Gastrocnemius medialis (tissue), 4 donors: ENCODE measurements at regions of chr12 and their contacts with region 1.

Region 1: DNA sequence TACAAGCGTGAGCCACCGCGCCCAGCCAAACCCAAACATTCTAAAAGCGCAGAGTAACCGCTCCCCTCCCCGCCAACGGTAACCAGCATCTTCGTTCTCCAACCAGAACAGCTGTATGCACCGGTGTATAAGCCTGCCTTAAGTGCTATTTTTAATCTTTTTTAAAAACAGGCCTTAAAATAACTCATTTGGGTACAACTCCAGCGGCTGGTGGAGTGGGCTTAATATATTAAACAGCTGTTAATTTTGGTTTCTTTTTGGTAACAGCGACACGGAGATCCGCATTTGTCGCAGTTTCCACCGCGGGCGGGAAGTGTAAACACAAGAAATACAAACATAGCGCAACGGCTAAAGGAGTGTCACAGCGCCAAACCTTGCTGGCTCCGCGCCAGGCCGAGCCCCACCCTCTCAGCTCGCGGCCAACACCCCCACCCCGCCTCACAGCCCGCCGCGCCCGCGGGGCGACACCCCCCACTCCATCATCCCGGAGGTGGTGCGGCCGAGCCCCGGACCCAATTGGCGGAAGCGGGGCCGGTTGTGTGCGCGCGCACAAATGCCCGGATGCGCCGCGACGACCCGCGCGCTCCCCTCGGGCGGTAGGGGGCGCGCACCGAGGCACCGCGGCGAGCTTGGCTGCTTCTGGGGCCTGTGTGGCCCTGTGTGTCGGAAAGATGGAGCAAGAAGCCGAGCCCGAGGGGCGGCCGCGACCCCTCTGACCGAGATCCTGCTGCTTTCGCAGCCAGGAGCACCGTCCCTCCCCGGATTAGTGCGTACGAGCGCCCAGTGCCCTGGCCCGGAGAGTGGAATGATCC is at the start of gene MDM2:
- DNase-seq: peak; percentile 87 to 93
- ATAC-seq: peak; percentile 85 to 91
- H3K4me3 ChIP-seq: peak within 1 kb of the TSS; percentile 88 to 98 (median 96)
- H3K27ac ChIP-seq: peak within 1 kb of the TSS; percentile 97 to 99 (median 98)
- H3K4me1 ChIP-seq: peaks cover 0 to 13% of the 10 kb centered on the region in 2 donors
- H3K27me3 ChIP-seq: no peaks in the 10 kb centered on the region
- CTCF ChIP-seq: peak; percentile 81 to 91 (median 86)
- POLR2A ChIP-seq: peak; percentile 84 to 90
- total RNA-seq, gene MDM2: 61.6 to 92.2 (median 70.0) TPM

Region 2: DNA sequence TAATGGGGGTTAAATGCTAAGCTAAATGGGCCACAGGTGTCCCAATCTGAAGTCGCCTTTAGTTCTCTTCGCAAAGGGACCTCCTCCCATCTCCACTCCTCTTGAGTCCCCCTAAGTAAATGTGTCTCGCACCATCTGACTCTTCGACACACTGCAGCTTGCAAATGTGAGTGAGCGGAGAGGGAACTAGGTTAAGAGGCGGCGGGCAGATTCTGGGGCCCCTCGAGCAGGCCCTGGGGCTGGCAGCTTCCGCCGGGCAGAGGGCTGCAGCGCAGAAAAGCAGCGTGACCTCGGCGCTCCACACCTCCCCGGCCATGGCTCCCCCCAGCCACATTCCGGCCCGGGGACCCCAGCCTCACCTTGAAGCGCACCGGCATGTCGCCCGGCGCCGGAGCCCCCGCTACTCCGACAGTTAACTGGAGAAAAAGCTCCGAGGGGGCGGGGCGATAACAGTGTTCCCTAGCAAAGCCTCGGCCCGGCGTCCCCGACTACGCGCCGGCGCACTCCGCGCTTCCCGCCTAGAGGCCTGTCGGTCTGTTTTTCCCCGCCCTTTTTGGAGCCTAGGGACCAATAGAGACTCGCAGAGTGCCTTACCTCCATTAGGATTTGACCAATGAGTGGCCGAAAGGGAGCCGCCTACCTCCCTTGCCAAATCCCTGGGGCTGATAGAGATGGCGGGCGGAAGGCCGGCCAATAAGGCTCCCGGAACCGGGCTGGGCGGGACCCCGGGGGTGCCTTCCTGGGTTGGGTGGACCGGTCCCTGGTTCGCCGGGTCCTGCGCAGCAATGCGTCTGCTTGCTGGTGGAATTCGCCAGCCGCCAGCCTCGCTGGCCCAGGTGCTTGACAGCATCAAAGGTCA is 475.7 kb before region 1 on chr12 and contains the start of gene MDM1:
- in situ Hi-C with region 1: no loop called
- intact Hi-C with region 1: loop called (anchors 10 kb)
- DNase-seq: peak; percentile 96 to 97
- ATAC-seq: peak; percentile 100
- H3K4me3 ChIP-seq: peak within 1 kb of the TSS; percentile 71 to 87 (median 84)
- H3K27ac ChIP-seq: peak within 1 kb of the TSS; percentile 41 to 71 (median 69)
- H3K4me1 ChIP-seq: peaks cover 0 to 8% of the 10 kb centered on the region in 2 donors
- H3K27me3 ChIP-seq: no peaks in the 10 kb centered on the region
- CTCF ChIP-seq: peak in 1 of 5 experiments; percentile 6
- POLR2A ChIP-seq: peak in 1 of 2 donors; percentile 33
- total RNA-seq, gene MDM1: 1.6 to 6.8 (median 3.4) TPM

Region 3: DNA sequence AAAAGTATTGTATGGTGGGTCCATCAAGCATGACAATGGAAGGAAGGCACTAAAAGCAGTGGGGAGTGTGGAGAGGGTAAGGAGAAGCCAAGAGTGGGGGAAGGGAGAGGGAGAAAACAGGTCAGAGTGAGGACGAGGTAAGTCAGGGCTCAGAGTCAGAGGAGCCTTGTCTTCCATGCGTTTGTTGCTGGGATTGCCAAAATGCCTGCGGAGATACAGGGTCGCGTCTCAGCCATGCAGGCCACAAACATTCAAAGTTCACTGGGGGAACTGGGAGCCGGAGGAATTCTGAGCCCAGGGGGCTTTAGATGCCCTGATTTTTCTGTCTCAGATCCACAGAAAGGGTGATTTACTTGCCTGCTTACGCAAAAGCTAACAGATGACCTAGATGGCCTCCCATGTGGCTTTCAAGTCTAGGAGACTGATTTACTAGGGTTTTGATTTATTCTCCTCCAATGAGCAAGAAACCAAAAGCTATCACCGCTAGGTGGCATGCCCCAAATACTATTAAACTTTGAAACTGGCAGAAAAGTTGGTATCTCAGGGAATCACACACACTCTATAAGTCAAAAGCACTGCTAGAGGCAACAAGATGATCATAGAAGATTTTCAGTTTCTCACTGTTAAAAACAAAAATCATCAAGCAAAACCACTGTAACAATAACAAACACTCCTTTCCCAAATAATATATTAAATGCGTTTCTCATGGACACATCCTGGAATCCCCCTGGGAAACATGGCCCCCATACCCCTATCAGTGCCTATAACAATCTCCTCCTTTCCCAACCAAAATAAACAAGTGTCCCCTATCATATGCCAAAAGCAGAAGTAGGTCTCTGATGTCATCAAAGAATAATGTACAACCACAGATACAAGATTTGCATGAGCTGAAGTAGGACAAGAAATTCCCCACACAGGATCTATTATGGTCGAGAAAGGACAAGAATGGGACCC is 449.0 kb before region 1 on chr12:
- in situ Hi-C with region 1: loop called in 1 of 4 experiments (anchors 25 kb)
- intact Hi-C with region 1: no loop called
- DNase-seq: peak; percentile 28 to 49
- ATAC-seq: peak; percentile 96
- H3K4me3 ChIP-seq: no peak overlapping the region
- H3K27ac ChIP-seq: peak overlapping the region in 3 of 4 donors; percentile 1 to 36 (median 25)
- H3K4me1 ChIP-seq: peaks cover 10 to 14% of the 10 kb centered on the region in 2 donors
- H3K27me3 ChIP-seq: no peaks in the 10 kb centered on the region
- CTCF ChIP-seq: peak; percentile 46 to 75 (median 69)
- POLR2A ChIP-seq: no peak

Region 4: GRCh38 chr12:68745904-68746571 is 61.7 kb before region 1 on chr12 and contains the start of gene SLC35E3:
- in situ Hi-C with region 1: loop called in 1 of 4 experiments (anchors 5 kb)
- intact Hi-C with region 1: loop called (anchors 1 kb)
- DNase-seq: peak; percentile 85 to 90
- ATAC-seq: peak; percentile 95 to 96
- H3K4me3 ChIP-seq: peak within 1 kb of the TSS; percentile 63 to 92 (median 79)
- H3K27ac ChIP-seq: peak within 1 kb of the TSS; percentile 63 to 84 (median 80)
- H3K4me1 ChIP-seq: peaks cover 21 to 26% of the 10 kb centered on the region in 2 donors
- H3K27me3 ChIP-seq: no peaks in the 10 kb centered on the region
- CTCF ChIP-seq: no peak
- POLR2A ChIP-seq: peak; percentile 54 to 69
- total RNA-seq, gene SLC35E3: 0.92 to 2.7 (median 1.6) TPM

Region 5: GRCh38 chr12:68786929-68787328 is 20.9 kb before region 1 on chr12:
- in situ Hi-C with region 1: no loop called
- intact Hi-C with region 1: no loop called
- DNase-seq: no peak
- ATAC-seq: no peak
- H3K4me3 ChIP-seq: no peak overlapping the region
- H3K27ac ChIP-seq: peak overlapping the region; percentile 16 to 37 (median 28)
- H3K4me1 ChIP-seq: peaks cover 3 to 4% of the 10 kb centered on the region in 2 donors
- H3K27me3 ChIP-seq: no peaks in the 10 kb centered on the region
- CTCF ChIP-seq: no peak
- POLR2A ChIP-seq: no peak

Region 6: GRCh38 chr12:68915055-68915454 is 107.3 kb after region 1 on chr12:
- in situ Hi-C with region 1: no loop called
- intact Hi-C with region 1: no loop called
- DNase-seq: no peak
- ATAC-seq: peak in 1 of 2 donors; percentile 11
- H3K4me3 ChIP-seq: no peak overlapping the region
- H3K27ac ChIP-seq: peak overlapping the region in 3 of 4 donors; percentile 12 to 59 (median 54)
- H3K4me1 ChIP-seq: no peaks in the 10 kb centered on the region
- H3K27me3 ChIP-seq: no peaks in the 10 kb centered on the region
- CTCF ChIP-seq: no peak
- POLR2A ChIP-seq: no peak

Region 7: GRCh38 chr12:69239352-69239921 is 431.7 kb after region 1 on chr12 and contains the start of gene CPSF6:
- in situ Hi-C with region 1: no loop called
- intact Hi-C with region 1: loop called (anchors 5 kb)
- DNase-seq: peak; percentile 90 to 91
- ATAC-seq: peak; percentile 95 to 96
- H3K4me3 ChIP-seq: peak within 1 kb of the TSS; percentile 80 to 94 (median 82)
- H3K27ac ChIP-seq: peak within 1 kb of the TSS; percentile 86 to 93 (median 89)
- H3K4me1 ChIP-seq: peaks cover 37 to 40% of the 10 kb centered on the region in 2 donors
- H3K27me3 ChIP-seq: no peaks in the 10 kb centered on the region
- CTCF ChIP-seq: peak in 1 of 5 experiments; percentile 25
- POLR2A ChIP-seq: peak; percentile 97 to 98
- total RNA-seq, gene CPSF6: 10.4 to 27.6 (median 18.6) TPM

Region 8: DNA sequence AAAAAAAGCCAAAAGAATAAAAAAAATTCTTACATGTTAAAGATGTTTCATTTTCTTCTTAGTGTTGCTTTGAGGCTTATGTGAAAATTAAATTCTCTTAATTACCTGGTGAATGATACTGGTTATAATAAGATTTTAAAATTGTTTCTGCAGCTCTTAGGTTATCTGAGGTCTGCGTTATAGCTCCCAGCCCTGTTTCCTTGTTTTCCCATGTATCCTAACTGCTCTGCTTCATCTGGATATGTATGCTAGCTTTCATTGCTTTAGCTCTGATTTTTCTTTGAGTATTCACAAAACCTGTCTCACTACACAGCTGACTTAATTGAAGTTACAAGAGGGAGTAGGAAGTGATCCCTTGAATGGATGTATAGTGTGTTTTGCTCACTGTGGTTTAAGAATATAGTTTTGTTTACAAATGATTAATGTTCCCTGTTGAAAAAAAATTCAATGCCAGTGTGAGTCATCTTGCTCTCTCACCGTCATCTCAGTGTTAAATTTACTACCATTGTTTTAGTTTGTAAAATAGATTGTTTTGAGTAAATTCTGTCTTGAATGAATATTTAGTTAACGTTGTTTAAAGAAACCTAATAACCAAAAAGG is 458.4 kb after region 1 on chr12:
- in situ Hi-C with region 1: no loop called
- intact Hi-C with region 1: no loop called
- DNase-seq: no peak
- ATAC-seq: no peak
- H3K4me3 ChIP-seq: no peak overlapping the region
- H3K27ac ChIP-seq: no peak overlapping the region
- H3K4me1 ChIP-seq: no peaks in the 10 kb centered on the region
- H3K27me3 ChIP-seq: no peaks in the 10 kb centered on the region
- CTCF ChIP-seq: no peak
- POLR2A ChIP-seq: no peak